AG04449 (cell line): ENCODE measurements at regions of chr9 and their contacts with region 1.

Region 1: GRCh38 chr9:120985810-120986222 is 59.2 kb upstream of the TRAF1 start:
- DNase-seq: peak; percentile 66
- H3K4me3 ChIP-seq: no peak overlapping the region
- CTCF ChIP-seq: peak; percentile 59

Region 2: DNA sequence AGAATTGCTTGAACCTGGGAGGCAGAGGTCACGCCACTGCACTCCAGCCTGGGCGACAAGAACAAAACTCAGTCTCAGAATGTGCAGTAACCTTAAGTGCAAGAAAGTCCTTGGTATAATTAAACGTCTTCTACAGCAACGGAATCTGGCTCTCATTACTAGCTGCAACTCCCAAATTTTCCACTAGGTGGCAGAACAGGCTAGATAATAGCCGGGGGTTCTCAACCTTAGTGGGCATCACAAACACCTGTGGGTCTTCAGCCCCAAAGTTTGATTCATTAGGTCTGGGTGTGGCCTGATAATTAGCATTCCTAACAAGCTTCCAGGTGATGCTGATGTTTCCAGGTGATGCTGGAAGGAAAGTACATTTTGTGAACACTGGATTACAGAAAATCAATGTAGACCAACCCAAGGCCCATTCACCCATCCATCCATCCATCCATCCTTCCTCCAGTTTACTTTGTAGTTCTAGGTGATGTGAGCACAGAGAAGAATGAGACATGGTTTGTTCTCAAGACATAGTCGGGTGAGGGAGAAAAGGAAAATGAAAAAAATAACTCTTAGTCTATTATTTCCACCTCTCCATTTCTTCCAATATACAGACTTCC is 229.9 kb before region 1 on chr9:
- CTCF ChIA-PET with region 1: interaction called, 30 read pairs
- POLR2A ChIA-PET with region 1: no interaction called
- DNase-seq: no peak
- H3K4me3 ChIP-seq: no peak overlapping the region
- CTCF ChIP-seq: peak; percentile 68

Region 3: DNA sequence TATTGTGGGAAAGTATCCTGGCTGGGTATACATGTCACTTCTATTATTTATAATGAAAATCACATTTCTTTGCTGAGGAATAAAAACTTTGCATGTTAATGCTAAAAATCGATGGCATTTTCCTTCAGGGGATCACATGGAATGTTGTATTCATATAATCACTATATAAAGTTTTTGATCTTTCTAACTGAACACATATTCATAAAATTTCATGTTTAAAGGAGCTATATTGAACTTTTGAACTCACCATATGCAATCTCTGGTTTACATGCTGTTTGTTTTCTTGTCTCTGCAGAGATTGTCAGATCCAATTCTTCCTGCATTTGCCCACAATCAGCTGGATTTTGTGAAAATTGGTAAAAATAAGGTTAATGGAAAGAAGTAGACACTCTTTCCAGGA is 25.8 kb before region 1 on chr9:
- CTCF ChIA-PET with region 1: interaction called, 20 read pairs
- POLR2A ChIA-PET with region 1: no interaction called
- DNase-seq: no peak
- H3K4me3 ChIP-seq: no peak overlapping the region
- CTCF ChIP-seq: no peak

Region 4: DNA sequence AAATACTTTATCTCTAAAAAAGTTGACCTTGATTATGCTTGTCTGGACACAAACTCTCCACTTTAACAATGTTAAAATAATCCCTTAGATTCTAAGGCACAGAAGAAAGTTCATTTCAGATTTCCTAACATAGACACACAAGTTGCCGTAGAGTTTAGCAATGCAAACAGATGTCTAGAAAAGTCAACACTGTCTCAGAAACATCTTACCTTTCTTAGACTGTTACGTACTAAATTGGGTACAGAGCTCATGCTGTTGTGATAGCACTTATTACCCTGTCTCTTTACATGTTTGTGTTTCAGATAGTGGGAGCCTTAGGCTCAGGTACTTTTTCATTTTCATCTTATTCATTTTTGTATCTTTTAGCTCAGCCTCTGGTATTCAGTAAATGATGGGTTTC is 12.3 kb after region 1 on chr9:
- CTCF ChIA-PET with region 1: interaction called, 17 read pairs
- POLR2A ChIA-PET with region 1: no interaction called
- DNase-seq: no peak
- H3K4me3 ChIP-seq: no peak overlapping the region
- CTCF ChIP-seq: no peak

Region 5: GRCh38 chr9:121059998-121060636 is 74.3 kb after region 1 on chr9:
- CTCF ChIA-PET with region 1: interaction called, 392 read pairs
- POLR2A ChIA-PET with region 1: no interaction called
- DNase-seq: no peak
- H3K4me3 ChIP-seq: no peak overlapping the region
- CTCF ChIP-seq: peak; percentile 59

Region 6: DNA sequence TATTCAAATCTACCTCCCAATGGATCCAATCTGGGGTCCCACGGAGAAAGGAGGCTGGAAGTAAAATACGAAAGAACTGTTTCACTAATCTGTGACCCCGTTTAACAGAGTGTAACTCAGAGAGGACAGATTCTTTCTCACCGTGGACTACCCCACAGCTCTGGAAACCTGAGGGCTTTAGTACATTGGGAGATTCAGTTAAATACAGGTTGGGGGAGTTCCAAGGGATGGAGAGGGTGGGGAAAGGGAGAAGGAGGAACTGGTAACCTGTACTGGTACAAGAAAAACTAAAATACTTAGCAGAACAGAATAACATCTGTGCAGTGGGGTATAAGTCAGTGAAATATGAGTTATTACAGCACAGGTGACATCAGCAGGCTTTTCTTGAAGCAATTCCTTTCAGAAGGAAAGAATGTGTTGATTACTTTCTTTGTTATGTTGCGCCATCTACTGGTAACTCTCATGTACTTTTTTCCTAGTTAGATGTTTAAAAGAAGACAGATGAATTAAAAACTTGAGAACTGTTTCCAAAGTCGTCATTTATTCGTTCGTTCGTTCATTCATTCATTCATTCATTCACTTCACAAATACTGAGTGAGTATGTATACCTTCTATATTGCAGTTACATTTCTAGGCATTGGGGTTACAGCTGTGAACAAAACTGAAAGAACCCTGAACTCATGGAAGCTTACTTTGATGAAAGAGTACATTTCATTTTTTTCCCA is 414.2 kb after region 1 on chr9:
- CTCF ChIA-PET with region 1: interaction called, 53 read pairs
- POLR2A ChIA-PET with region 1: no interaction called
- DNase-seq: peak; percentile 37
- H3K4me3 ChIP-seq: no peak overlapping the region
- CTCF ChIP-seq: peak; percentile 28